AG04449 (cell line): ENCODE measurements at regions of chr3 and their contacts with region 1.

Region 1: GRCh38 chr3:128170805-128171516 is 17.7 kb downstream of the EEFSEC start:
- DNase-seq: no peak
- H3K4me3 ChIP-seq: no peak overlapping the region
- CTCF ChIP-seq: peak; percentile 97

Region 2: DNA sequence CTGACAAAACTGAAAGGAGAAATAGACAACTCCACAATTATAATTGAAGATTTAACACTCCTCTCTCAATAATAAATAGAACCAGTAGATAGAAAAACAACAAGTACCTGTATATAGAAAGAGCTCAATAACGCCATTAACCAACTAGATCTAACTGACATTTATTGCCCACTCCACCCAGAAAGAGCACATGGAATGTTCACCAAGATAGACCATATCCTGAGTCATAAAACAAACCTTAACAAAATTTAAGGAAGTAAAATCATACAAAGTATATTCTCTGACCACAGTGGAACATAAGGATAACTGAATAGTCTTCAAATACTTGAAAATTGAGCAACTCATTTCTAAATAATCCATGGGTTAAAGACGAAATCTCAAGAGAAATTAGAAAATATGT is 230.8 kb before region 1 on chr3:
- CTCF ChIA-PET with region 1: no interaction called
- POLR2A ChIA-PET with region 1: no interaction called
- DNase-seq: no peak
- H3K4me3 ChIP-seq: no peak overlapping the region
- CTCF ChIP-seq: no peak

Region 3: DNA sequence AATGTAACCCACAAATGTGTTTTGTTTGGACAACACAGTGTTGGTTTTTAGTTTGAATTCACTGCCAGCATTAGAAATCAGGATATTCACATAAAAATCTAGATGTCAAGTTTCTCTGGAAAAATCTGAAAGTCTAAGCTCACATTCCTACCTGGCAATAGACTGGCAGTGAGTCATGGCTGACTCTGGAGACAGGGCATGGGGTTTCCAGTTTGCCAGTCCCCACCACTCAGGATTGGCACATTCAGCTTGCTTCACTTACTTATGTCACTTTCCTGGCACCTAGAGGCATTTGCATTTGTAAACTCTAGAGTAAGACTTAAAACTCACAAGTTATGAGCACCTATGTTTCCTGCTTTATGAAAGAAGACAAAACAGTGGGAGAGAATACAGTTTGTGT is 137.9 kb before region 1 on chr3:
- CTCF ChIA-PET with region 1: no interaction called
- POLR2A ChIA-PET with region 1: no interaction called
- DNase-seq: no peak
- H3K4me3 ChIP-seq: no peak overlapping the region
- CTCF ChIP-seq: no peak

Region 4: DNA sequence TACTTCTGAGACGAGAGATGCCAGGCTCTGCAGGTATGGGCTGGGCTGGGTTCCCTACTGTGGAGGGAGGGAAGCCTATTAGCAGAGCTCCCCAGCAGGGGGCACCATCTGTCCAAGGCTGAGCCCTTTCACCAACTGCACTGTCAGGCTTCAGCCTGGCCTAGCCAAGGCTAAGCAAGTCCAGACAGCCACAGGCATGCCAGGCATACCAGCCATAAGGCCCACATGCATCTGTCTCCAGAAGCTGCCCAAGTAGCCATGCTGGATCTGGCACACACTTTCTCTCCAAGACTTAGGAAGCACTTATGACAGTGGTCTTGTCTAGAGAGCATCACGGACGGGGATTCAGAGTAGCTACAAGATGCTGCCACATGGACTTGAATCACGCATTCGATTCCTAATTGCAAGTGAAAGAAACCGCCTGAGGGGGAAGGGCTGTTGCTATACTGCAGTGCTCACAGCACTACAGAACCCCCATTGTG is 75.7 kb before region 1 on chr3:
- CTCF ChIA-PET with region 1: interaction called, 21 read pairs
- POLR2A ChIA-PET with region 1: no interaction called
- DNase-seq: peak; percentile 82
- H3K4me3 ChIP-seq: no peak overlapping the region
- CTCF ChIP-seq: peak; percentile 90

Region 5: DNA sequence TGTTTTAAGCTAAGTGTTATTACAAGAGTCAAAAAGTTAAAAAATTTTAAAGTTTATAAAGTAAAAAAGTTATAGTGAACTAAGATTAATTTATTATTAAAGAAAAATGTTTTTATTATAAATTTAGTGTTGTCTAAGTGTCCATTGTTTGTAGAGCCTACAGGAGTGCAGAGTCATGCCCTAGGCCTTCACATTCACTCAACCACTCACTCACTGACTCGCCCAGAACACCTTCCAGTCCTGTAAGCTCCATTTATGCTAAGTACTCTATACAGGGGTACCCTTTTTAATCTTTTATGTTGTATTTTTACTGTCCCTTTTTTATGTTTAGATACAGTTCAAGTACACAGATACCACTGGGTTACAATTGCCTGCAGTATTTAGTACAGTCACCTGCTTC is 19.5 kb after region 1 on chr3:
- CTCF ChIA-PET with region 1: interaction called, 29 read pairs
- POLR2A ChIA-PET with region 1: no interaction called
- DNase-seq: no peak
- H3K4me3 ChIP-seq: no peak overlapping the region
- CTCF ChIP-seq: no peak

Region 6: GRCh38 chr3:128322066-128323022 is 151.4 kb after region 1 on chr3:
- CTCF ChIA-PET with region 1: interaction called, 18 read pairs
- POLR2A ChIA-PET with region 1: no interaction called
- DNase-seq: no peak
- H3K4me3 ChIP-seq: no peak overlapping the region
- CTCF ChIP-seq: peak; percentile 67

Region 7: DNA sequence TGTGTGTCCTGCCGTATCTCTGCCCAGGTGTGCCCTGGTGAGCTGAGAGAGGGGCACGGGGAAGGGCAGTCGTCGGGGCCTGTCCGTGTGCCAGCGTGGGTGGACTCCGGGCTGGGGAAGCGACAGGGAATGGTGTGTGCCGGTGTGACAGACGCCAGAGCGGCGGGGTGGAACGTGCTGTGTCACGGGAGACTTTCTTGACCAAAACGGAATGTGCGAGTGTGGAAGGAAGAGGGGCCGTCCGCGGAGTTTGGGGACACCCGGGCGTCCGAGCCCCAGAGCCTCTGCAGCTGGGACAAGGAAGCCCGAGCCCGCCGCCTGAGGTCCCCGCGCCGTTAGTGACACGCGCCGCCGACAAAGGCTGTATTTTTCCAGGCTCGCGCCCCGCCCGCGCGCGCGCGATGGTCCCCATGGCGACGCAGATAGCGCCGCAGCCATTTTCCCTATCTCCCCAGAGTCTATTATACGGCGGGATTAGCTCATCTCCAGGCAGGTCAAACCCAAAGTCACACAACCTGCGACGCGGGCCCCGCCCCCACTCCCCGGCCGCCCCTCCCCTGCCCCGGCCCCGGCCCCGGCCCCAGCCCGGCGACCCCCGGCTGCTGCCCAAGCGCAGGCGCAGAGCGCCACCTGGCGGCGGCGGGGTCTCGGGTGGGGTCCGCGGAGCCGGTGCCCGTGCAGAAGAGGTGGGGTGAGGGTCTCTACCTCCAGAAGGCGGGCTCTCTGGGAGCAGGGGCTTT is 326.6 kb after region 1 on chr3:
- CTCF ChIA-PET with region 1: interaction called, 11 read pairs
- POLR2A ChIA-PET with region 1: no interaction called
- DNase-seq: no peak
- H3K4me3 ChIP-seq: peak overlapping the region; percentile 57
- CTCF ChIP-seq: peak; percentile 79

Region 8: DNA sequence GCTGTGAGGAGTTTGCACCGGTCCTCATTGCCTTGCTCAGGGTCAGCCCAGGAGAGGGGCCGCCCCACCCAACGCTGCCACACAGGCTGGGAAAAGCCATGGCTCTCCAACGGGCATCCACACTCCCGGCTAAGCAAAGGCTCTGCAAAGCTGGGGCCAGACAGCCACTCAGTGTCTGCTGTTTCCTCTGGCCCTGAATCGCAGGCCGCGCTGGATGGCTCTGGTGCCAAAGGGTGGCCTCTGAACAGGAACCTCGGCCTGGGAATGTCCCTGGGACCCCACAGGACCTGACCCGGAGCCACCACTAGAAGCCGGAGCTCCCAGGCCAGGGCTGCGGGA is 436.7 kb after region 1 on chr3:
- CTCF ChIA-PET with region 1: interaction called, 128 read pairs
- POLR2A ChIA-PET with region 1: no interaction called
- DNase-seq: no peak
- H3K4me3 ChIP-seq: peak overlapping the region; percentile 63
- CTCF ChIP-seq: no peak